ENCODE measurements at regions of chr5 and their contacts with region 1.

Region 1: GRCh38 chr5:134465816-134466240 is 54.1 kb upstream of the CDKN2AIPNL start:
- DNase-seq: peak; percentile 94
- H3K4me3 ChIP-seq: peak overlapping the region in 2 of 3 experiments; percentile 29 to 46
- H3K27ac ChIP-seq: peak overlapping the region; percentile 94
- H3K4me1 ChIP-seq: peaks cover 17% of the 10 kb centered on the region
- H3K27me3 ChIP-seq: no peaks in the 10 kb centered on the region
- CTCF ChIP-seq: no peak
- POLR2A ChIP-seq: peak; percentile 66

Region 2: GRCh38 chr5:134411546-134412266 is 54.1 kb before region 1 on chr5 and contains the start of gene CDKN2AIPNL:
- CTCF ChIA-PET with region 1: interaction called, 15 read pairs
- POLR2A ChIA-PET with region 1: interaction called, 3 read pairs
- dilution Hi-C with region 1: no loop called
- intact Hi-C with region 1: loop called (anchors 1 kb)
- DNase-seq: peak; percentile 86
- H3K4me3 ChIP-seq: peak within 1 kb of the TSS; percentile 75 to 88 (median 84)
- H3K27ac ChIP-seq: peak within 1 kb of the TSS; percentile 40
- H3K4me1 ChIP-seq: peaks cover 15% of the 10 kb centered on the region
- H3K27me3 ChIP-seq: no peaks in the 10 kb centered on the region
- CTCF ChIP-seq: peak; percentile 71 to 86
- POLR2A ChIP-seq: peak; percentile 86
- total RNA-seq, gene CDKN2AIPNL: 35.1 and 36.5 TPM in 2 replicates

Region 3: DNA sequence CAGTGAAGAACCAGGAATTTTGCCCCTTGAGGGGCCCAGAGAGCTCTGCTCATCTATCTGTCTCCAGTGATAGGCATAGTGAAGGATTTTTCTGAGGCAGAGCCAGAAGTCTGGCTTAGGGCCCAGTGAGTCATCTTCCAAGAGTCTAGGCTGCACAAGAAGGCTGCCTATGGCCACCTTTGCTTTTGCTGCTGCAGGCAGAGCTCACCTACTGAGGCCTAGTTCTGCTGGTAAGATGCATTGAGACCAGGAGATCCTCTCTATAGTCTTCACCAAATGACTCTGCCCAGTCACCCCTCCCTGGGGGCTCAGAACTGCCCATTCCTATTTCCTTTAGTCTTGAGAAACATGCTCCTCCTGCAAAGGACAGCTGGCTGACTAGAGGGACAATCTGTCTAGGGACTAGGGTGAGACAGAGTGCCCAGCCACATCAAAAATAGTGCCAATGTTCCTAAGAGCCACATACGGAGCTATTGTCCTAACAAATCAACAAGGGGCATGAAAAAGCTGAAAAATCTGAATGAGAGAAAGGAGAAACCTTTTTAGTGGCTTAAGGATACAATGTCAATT is 13.8 kb before region 1 on chr5:
- CTCF ChIA-PET with region 1: interaction called, 10 read pairs
- POLR2A ChIA-PET with region 1: no interaction called
- dilution Hi-C with region 1: no loop called
- intact Hi-C with region 1: loop called (anchors 1 kb)
- DNase-seq: peak; percentile 70
- H3K4me3 ChIP-seq: no peak overlapping the region
- H3K27ac ChIP-seq: no peak overlapping the region
- H3K4me1 ChIP-seq: no peaks in the 10 kb centered on the region
- H3K27me3 ChIP-seq: no peaks in the 10 kb centered on the region
- CTCF ChIP-seq: no peak
- POLR2A ChIP-seq: no peak

Region 4: DNA sequence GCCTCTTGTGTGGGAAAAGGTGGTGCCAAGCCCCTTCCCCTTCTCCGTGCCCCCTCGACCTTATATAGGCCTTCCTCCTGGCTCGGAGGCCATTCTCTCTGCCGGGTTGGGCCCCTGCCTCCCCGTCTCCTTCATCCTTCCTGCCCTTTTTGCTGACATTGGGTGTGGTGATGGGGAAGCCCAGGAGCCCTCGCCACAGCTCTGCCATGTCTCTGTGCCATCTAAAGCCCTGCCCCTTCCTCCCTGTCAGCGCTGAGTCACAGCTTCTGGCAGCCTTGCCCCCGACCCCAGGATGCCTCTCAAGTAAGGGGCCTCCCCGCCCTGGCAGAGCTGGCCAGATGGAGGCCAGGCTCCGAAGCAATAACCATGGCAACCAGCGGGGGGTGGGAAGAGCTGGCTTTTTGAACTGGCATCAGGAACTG is 90.1 kb after region 1 on chr5:
- CTCF ChIA-PET with region 1: no interaction called
- POLR2A ChIA-PET with region 1: no interaction called
- dilution Hi-C with region 1: no loop called
- intact Hi-C with region 1: loop called (anchors 2 kb)
- DNase-seq: peak; percentile 91
- H3K4me3 ChIP-seq: no peak overlapping the region
- H3K27ac ChIP-seq: peak overlapping the region; percentile 88
- H3K4me1 ChIP-seq: peaks cover 56% of the 10 kb centered on the region
- H3K27me3 ChIP-seq: no peaks in the 10 kb centered on the region
- CTCF ChIP-seq: no peak
- POLR2A ChIP-seq: no peak

Region 5: GRCh38 chr5:134758504-134759341 is 292.9 kb after region 1 on chr5 and contains the start of gene DDX46:
- CTCF ChIA-PET with region 1: no interaction called
- POLR2A ChIA-PET with region 1: no interaction called
- dilution Hi-C with region 1: no loop called
- intact Hi-C with region 1: loop called (anchors 5 kb)
- DNase-seq: peak; percentile 95
- H3K4me3 ChIP-seq: peak within 1 kb of the TSS; percentile 54 to 87 (median 76)
- H3K27ac ChIP-seq: peak within 1 kb of the TSS; percentile 45
- H3K4me1 ChIP-seq: peaks cover 15% of the 10 kb centered on the region
- H3K27me3 ChIP-seq: no peaks in the 10 kb centered on the region
- CTCF ChIP-seq: peak; percentile 84 to 89
- POLR2A ChIP-seq: peak; percentile 94
- total RNA-seq, gene DDX46: 58.0 and 65.2 TPM in 2 replicates